Activated CD4-positive, alpha-beta T cell treated with anti-CD3 and anti-CD28 coated beads, Interleukin-2, amount 10 ng/mL, durations not matched to agents 24 days and 14 days (primary cell): ENCODE measurements at regions of chr7 and their contacts with region 1.

Region 1: DNA sequence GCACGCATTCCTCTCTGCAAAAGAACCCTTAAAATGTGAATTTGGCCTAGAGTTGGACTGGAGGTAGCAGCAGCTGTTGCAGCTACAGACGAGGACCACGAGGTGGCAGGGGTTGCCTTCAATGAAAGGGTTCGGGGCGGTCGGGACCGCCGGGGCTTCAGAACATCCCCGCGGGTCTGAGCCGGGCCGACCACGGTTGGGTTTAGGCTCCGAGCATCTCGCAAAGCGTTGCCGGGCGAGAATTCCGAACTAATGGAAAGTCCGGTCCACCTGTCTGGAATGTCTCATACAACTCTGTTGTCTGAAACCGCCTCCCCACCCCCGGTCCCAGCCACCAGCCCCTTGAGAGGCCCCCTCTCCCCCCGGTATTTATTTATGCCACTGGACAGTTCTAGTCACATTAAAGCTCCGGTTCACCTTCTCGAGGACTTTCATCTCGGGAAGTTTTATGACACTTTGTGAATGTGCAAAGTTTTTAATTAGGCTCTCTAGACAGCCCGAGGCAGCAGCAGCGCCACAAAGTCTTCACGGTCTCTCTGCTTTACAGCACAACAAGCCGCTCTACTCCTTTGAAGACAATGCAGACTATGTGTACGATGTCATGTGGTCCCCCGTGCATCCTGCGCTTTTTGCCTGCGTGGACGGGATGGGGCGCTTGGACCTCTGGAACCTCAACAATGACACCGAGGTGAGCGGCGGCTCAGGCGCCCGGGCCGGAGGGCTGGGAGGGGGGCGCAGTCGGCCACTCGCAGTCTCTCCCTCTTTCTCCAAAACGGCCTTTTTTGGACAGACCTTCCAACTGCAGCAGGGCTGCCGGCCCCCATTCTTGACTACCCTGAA is 246.2 kb downstream of the SLC25A13 start:
- DNase-seq: peak; percentile 81
- H3K4me3 Mint-ChIP-seq: peak overlapping the region; percentile 78
- H3K27ac Mint-ChIP-seq: no peak overlapping the region
- H3K4me1 Mint-ChIP-seq: peaks cover 5% of the 10 kb centered on the region
- H3K27me3 Mint-ChIP-seq: peaks cover 45% of the 10 kb centered on the region

Region 2: GRCh38 chr7:95916573-95917297 is 159.0 kb before region 1 on chr7:
- intact Hi-C with region 1: loop called (anchors 10 kb)
- DNase-seq: peak; percentile 90
- H3K4me3 Mint-ChIP-seq: no peak overlapping the region
- H3K27ac Mint-ChIP-seq: no peak overlapping the region
- H3K4me1 Mint-ChIP-seq: peaks cover 7% of the 10 kb centered on the region
- H3K27me3 Mint-ChIP-seq: peaks cover 15% of the 10 kb centered on the region

Region 3: GRCh38 chr7:96287132-96287531 is 211.4 kb after region 1 on chr7:
- intact Hi-C with region 1: no loop called
- DNase-seq: no peak
- H3K4me3 Mint-ChIP-seq: no peak overlapping the region
- H3K27ac Mint-ChIP-seq: peak overlapping the region; percentile 36
- H3K4me1 Mint-ChIP-seq: peaks cover 54% of the 10 kb centered on the region
- H3K27me3 Mint-ChIP-seq: no peaks in the 10 kb centered on the region

Region 4: DNA sequence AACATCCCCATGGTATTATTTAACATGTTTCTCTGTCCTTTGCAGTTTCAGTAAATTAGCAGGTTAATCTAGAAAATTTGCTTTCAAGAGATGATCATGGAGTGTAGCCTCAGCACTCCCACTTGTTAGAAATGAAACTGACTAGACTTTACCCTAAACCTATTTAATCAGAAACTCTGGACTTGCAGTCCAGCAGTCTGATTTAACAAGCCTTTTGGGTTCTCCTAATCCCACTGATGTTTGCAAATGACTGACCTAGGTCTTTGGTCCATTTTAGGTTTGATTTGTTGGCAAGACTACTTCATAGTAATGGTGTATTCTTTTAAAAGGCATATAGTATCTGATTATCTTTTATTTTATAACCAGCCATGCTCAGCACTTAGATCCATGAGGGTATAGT is 301.7 kb after region 1 on chr7:
- intact Hi-C with region 1: loop called (anchors 5 kb)
- DNase-seq: no peak
- H3K4me3 Mint-ChIP-seq: no peak overlapping the region
- H3K27ac Mint-ChIP-seq: no peak overlapping the region
- H3K4me1 Mint-ChIP-seq: no peaks in the 10 kb centered on the region
- H3K27me3 Mint-ChIP-seq: peaks cover 8% of the 10 kb centered on the region

Region 5: DNA sequence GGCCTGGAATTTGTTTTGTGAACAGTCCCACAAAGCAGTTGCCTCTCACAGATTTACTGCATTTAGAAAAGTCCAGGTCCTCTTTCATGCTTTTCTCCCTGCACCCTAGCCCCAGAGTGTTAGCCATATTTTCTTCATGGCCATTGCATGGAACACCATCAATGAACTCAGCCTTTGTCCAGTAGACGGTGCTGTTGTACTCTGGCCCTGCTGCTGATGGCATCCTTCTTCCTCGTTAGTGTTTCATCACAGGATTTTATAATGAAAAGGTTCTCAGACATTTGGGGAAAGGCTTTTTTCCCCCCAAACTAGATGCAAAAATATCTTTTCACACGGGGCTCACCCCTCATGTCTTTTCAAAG is 339.2 kb after region 1 on chr7:
- intact Hi-C with region 1: loop called (anchors 5 kb)
- DNase-seq: peak; percentile 88
- H3K4me3 Mint-ChIP-seq: no peak overlapping the region
- H3K27ac Mint-ChIP-seq: no peak overlapping the region
- H3K4me1 Mint-ChIP-seq: peaks cover 3% of the 10 kb centered on the region
- H3K27me3 Mint-ChIP-seq: peaks cover 18% of the 10 kb centered on the region

Region 6: DNA sequence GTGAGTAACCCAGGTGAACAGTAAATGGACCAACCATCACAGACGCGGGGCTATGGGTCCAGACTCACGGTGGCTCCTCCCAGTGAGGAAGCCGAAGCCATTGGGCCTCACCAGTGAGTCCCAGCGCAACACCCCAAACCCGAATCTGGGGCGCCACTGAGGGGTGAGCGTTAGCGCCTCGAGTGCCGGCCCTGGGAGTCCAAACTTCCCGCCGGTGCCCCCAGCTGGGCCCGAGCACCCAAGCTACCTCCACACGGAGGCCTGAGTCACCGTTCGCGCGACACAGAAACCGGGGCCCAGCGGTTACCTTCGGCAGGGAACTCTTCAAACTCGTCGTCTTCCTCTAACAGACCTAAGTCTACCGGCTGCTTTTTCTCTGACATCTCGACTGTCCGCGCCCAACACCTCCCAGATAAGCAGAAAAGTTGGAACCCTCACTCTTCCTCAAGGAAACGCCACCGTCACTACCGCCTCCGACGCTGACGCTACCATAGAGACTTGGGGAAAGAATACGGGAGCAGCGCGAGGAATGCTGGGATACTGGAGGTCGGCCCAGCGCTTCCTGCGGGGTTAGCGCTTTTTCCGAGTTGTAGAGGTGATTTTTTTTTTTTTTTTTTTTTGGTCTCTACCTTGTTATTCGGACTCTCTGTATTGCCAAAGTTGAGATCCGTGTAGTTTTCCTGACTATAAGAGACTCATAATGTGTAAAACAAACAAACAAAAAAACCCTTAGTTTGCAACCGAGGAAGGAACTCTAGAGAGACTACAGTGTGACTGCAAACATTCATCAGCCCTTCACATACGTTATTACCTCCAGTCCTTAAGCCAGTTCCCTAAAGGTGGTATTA is 633.9 kb after region 1 on chr7 and contains the start of gene SEM1:
- intact Hi-C with region 1: loop called (anchors 5 kb)
- DNase-seq: peak; percentile 88
- H3K4me3 Mint-ChIP-seq: peak within 1 kb of the TSS; percentile 95
- H3K27ac Mint-ChIP-seq: peak within 1 kb of the TSS; percentile 97
- H3K4me1 Mint-ChIP-seq: peaks cover 20% of the 10 kb centered on the region
- H3K27me3 Mint-ChIP-seq: peaks cover 1% of the 10 kb centered on the region
- total RNA-seq, gene SEM1: 41.5 and 43.8 TPM in 2 replicates